Posterior cingulate gyrus (tissue), 11 donors: ENCODE measurements at regions of chr18 and their contacts with region 1.

Region 1: DNA sequence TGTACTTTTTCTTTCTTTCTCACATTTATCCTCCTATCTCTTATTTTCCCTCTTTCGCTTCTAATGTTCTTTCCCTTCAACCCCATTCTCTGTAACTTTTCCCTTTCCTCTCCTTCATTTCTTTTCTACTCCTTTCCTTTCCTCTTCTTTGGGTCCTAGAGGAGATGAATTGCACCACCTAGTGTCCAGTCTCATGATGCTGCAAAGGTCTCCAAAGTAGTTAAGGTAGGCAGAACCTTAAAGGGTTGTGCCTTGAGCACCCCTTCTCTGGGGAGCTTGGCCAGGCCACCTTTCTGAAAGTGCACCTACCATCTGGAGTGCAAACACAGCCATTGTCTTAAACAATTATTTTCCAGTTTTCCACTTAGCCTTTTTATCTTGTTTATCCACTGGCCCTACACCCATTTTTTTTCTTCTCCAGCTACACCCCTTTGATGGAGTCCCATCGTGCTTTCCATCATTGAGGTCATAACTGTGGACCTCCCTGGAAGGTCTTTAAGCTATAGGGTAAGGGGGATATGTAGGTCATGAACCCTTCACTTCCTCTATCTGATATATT is 156.0 kb downstream of the ESCO1 start:
- DNase-seq: peak in 3 of 10 donors; percentile 19 to 49 (median 29)

Region 2: GRCh38 chr18:21242780-21243500 is 201.6 kb before region 1 on chr18:
- intact Hi-C with region 1: loop called (anchors 2 kb)
- DNase-seq: peak in 9 of 10 donors; percentile 8 to 83 (median 24)